Activated T-helper 1 cell treated with anti-CD3 and anti-CD28 coated beads, Interleukin-12 subunit alpha, Interleukin-12 subunit beta, Interleukin-2, Interleukin-4 antibody, amounts not matched to agents 30 ng/mL and 10 ng/mL and 1 ng/mL, durations not matched to agents 14 hours and 24 hours and 36 hours (primary cell): ENCODE measurements at regions of chr11 and their contacts with region 1.

Region 1: GRCh38 chr11:119741369-119742262 is 12.6 kb upstream of the NECTIN1 start:
- DNase-seq: peak; percentile 27
- H3K4me3 Mint-ChIP-seq: no peak overlapping the region
- H3K27ac Mint-ChIP-seq: no peak overlapping the region
- H3K4me1 Mint-ChIP-seq: no peaks in the 10 kb centered on the region
- H3K27me3 Mint-ChIP-seq: peaks cover 34% of the 10 kb centered on the region

Region 2: GRCh38 chr11:119095066-119095880 is 646.3 kb before region 1 on chr11:
- intact Hi-C with region 1: no loop called
- DNase-seq: peak; percentile 100
- H3K4me3 Mint-ChIP-seq: peak overlapping the region; percentile 95
- H3K27ac Mint-ChIP-seq: peak overlapping the region; percentile 91
- H3K4me1 Mint-ChIP-seq: peaks cover 59% of the 10 kb centered on the region
- H3K27me3 Mint-ChIP-seq: peaks cover 4% of the 10 kb centered on the region

Region 3: GRCh38 chr11:119641983-119642745 is 99.5 kb before region 1 on chr11:
- intact Hi-C with region 1: loop called (anchors 1 kb)
- DNase-seq: no peak
- H3K4me3 Mint-ChIP-seq: no peak overlapping the region
- H3K27ac Mint-ChIP-seq: no peak overlapping the region
- H3K4me1 Mint-ChIP-seq: no peaks in the 10 kb centered on the region
- H3K27me3 Mint-ChIP-seq: no peaks in the 10 kb centered on the region

Region 4: DNA sequence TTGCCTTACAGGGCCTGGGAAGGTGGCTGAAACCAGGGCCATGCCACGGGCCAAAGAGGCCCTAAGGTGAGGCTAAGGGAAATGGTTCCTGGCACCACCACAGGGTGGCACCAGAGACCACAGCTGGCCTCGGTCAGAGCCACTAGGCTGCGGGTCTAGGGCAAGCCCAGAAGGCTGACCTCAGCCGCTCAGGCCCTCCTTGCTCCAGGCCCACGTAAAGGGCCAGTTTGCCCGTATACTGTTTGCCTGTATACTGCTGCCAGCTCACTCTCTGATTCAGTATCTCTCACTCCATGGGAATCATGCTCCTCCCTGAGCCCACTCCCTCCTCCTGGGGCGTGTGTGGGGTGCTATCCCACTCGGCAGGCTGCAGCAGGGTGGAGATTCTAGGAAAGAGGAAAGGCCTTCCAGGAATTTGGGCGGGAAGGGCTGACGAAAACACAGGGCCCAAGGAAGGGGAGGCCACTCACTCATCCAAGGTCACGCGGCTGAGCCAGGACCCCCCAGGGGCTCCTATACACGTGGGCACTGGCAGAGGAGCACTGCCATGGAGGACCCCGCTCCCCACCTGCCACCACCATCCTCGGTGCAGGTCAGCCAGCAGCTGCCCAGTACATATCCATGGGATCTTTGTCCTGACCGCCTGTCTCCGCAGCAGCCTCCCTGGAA is 75.0 kb before region 1 on chr11:
- intact Hi-C with region 1: loop called (anchors 1 kb)
- DNase-seq: peak; percentile 38
- H3K4me3 Mint-ChIP-seq: no peak overlapping the region
- H3K27ac Mint-ChIP-seq: no peak overlapping the region
- H3K4me1 Mint-ChIP-seq: no peaks in the 10 kb centered on the region
- H3K27me3 Mint-ChIP-seq: no peaks in the 10 kb centered on the region

Region 5: GRCh38 chr11:120108154-120108865 is 366.7 kb after region 1 on chr11:
- intact Hi-C with region 1: loop called (anchors 5 kb)
- DNase-seq: peak; percentile 30
- H3K4me3 Mint-ChIP-seq: no peak overlapping the region
- H3K27ac Mint-ChIP-seq: no peak overlapping the region
- H3K4me1 Mint-ChIP-seq: no peaks in the 10 kb centered on the region
- H3K27me3 Mint-ChIP-seq: peaks cover 3% of the 10 kb centered on the region